Esophagus muscularis mucosa (tissue), 4 donors: ENCODE measurements at regions of chr4 and their contacts with region 1.

Region 1: DNA sequence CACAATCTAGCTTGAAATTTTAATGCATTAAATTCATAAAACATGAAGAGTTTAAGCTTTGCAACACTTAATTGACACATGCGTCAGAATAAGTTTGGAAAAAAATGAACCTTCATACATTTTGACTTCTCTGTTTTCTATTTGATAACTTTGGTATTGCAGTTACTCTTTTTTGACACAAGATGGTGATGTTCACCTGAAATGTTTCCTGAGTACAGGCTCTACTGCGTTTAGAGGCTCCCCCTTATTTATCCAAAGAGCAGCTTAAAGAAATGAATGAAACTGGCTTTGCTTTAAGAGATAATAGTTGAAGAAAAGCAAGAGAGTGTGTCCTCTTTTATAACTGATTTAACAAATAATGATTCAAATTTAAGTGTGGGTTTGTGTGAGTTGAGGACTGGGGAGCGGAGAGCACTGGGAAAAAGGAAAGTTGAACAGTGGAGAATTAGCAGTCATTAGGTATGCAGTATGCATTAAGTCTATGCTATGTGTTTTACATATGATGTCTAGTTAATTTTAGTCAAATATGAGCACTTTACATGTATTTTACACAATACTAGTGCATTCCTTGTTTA is 180.6 kb upstream of the NUDT6 start:
- DNase-seq: no peak
- H3K4me3 ChIP-seq: no peak overlapping the region
- H3K27ac ChIP-seq: no peak overlapping the region
- H3K4me1 ChIP-seq: peaks cover 0 to 15% (median 9%) of the 10 kb centered on the region in 4 donors
- H3K27me3 ChIP-seq: no peaks in the 10 kb centered on the region
- CTCF ChIP-seq: peak; percentile 73 to 85 (median 78)
- EP300 ChIP-seq: no peak
- POLR2A ChIP-seq: no peak

Region 2: DNA sequence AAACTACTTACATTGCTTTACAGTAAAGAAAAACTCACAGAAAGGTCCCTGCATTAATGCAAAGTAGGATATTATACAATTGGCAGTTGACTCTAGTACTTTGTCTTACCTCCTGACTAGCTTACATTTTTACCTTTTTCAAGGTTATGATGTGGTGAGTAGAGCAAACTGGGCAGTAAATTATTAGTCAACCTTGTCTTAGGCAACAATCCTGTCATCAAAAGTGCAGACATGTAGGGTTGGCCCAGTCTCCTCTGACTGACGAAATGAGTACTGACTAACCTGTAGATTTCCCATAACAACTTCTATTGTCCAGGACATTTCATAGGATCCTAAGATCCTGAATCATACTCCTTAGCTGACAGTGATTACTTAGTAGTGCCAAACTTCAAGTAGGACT is 38.6 kb before region 1 on chr4:
- intact Hi-C with region 1: no loop called
- DNase-seq: no peak
- H3K4me3 ChIP-seq: no peak overlapping the region
- H3K27ac ChIP-seq: no peak overlapping the region
- H3K4me1 ChIP-seq: no peaks in the 10 kb centered on the region
- H3K27me3 ChIP-seq: no peaks in the 10 kb centered on the region
- CTCF ChIP-seq: no peak
- EP300 ChIP-seq: no peak
- POLR2A ChIP-seq: no peak

Region 3: DNA sequence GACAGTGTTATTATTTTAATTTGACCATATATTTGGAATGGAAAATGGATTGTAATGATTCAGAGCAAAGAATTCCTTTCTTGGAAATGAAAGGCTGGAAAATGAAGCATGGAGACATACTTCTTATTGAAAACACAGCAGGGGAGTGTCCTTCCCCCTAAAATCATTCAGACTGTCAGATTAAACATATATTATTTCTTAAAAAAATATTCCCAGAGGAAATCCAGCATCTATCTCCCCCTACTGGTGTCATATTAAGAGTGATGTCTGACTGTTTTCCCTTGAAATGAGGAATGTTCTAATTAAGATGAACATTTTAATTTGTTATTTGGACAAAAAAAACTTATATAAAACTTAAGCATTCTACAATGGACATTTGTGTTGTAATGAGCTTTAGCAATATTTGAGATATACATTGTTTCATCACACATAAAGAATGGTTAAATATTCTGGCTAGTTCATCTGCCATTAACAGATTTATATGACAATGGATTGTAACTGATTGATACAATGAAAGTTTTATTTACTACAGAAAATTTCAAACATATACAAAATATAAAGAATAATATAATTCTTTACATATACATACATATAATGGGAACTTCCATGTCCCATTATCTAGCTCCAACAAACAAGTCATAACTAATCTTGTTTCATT is 558.2 kb after region 1 on chr4:
- intact Hi-C with region 1: loop called (anchors 10 kb)
- DNase-seq: no peak
- H3K4me3 ChIP-seq: no peak overlapping the region
- H3K27ac ChIP-seq: no peak overlapping the region
- H3K4me1 ChIP-seq: no peaks in the 10 kb centered on the region
- H3K27me3 ChIP-seq: no peaks in the 10 kb centered on the region
- CTCF ChIP-seq: peak; percentile 40 to 54 (median 42)
- EP300 ChIP-seq: no peak
- POLR2A ChIP-seq: no peak

Region 4: GRCh38 chr4:124262211-124263179 is 1159.5 kb after region 1 on chr4:
- intact Hi-C with region 1: loop called (anchors 5 kb)
- DNase-seq: no peak
- H3K4me3 ChIP-seq: no peak overlapping the region
- H3K27ac ChIP-seq: no peak overlapping the region
- H3K4me1 ChIP-seq: peaks cover 0 to 7% (median 0%) of the 10 kb centered on the region in 4 donors
- H3K27me3 ChIP-seq: no peaks in the 10 kb centered on the region
- CTCF ChIP-seq: peak; percentile 76 to 87 (median 78)
- EP300 ChIP-seq: no peak
- POLR2A ChIP-seq: no peak

Region 5: GRCh38 chr4:124322234-124323065 is 1219.5 kb after region 1 on chr4:
- intact Hi-C with region 1: loop called (anchors 5 kb)
- DNase-seq: no peak
- H3K4me3 ChIP-seq: peak overlapping the region in 2 of 4 donors; percentile 6 to 19
- H3K27ac ChIP-seq: peak overlapping the region in 1 of 4 donors; percentile 34
- H3K4me1 ChIP-seq: no peaks in the 10 kb centered on the region
- H3K27me3 ChIP-seq: no peaks in the 10 kb centered on the region
- CTCF ChIP-seq: peak; percentile 50 to 66 (median 66)
- EP300 ChIP-seq: no peak
- POLR2A ChIP-seq: no peak

Region 6: GRCh38 chr4:124610210-124610609 is 1507.2 kb after region 1 on chr4:
- intact Hi-C with region 1: no loop called
- DNase-seq: no peak
- H3K4me3 ChIP-seq: no peak overlapping the region
- H3K27ac ChIP-seq: no peak overlapping the region
- H3K4me1 ChIP-seq: no peaks in the 10 kb centered on the region
- H3K27me3 ChIP-seq: no peaks in the 10 kb centered on the region
- CTCF ChIP-seq: no peak
- EP300 ChIP-seq: no peak
- POLR2A ChIP-seq: no peak